ENCODE measurements at regions of chr16 and their contacts with region 1.

Region 1: DNA sequence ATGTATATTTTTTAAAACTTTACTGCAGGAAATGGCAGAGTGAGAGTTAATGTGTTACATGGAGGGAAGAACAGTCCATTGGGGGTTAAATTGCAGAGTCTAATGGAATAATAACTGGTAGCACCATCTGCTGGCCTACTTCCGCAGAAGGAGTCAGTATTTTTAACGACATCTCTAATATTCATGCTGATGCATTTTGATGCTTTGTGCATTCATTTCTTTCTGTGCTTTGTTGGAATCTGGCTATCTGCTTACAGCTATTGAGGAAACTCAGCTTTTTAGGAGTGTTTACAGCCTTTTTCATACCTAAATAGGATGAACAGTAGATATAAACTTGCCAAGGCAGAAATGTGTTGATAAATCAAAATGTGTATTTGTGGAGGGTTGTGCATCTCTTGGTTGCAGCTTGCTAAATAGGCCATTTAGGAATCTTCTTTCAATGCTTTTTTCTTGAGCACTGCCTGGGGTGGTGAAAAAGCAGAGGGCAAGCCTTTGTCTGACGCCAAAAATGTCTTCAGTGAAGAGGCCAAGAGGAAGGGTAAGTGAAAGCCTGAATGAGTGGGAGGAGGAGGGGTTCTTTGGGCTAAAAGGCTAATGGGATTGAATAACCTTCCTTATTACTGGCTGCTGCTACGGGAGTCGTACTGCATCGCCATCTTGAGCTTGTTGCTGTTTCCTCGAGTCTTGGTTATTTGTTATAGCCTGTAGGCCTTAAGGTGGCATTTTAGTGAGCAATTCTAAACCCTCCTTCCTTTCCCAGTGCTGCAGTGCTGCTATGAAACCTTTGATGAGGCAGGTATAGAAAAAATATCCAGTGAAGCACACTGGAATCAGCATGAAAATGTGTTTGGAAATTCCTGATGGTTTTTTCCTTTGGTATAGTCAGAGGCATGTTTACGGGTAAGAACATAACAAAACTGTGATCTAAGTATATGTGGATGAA is 153.3 kb downstream of the CHD9 start:
- DNase-seq: no peak
- ATAC-seq: peak; percentile 84 to 89 (median 86)
- H3K4me3 ChIP-seq: peak overlapping the region; percentile 69
- H3K27ac ChIP-seq: peak overlapping the region; percentile 86
- H3K4me1 ChIP-seq: peaks cover 61% of the 10 kb centered on the region
- H3K27me3 ChIP-seq: no peaks in the 10 kb centered on the region
- CTCF ChIP-seq: peak; percentile 52

Region 2: GRCh38 chr16:53159781-53160436 is 48.2 kb before region 1 on chr16:
- intact Hi-C with region 1: loop called in 1 of 2 experiments (anchors 5 kb)
- DNase-seq: no peak
- ATAC-seq: peak; percentile 51 to 86 (median 68)
- H3K4me3 ChIP-seq: no peak overlapping the region
- H3K27ac ChIP-seq: no peak overlapping the region
- H3K4me1 ChIP-seq: no peaks in the 10 kb centered on the region
- H3K27me3 ChIP-seq: no peaks in the 10 kb centered on the region
- CTCF ChIP-seq: peak; percentile 71

Measured in psoas muscle (tissue), 8 donors.